GM12878 (cell line): ENCODE measurements at regions of chrX and their contacts with region 1.

Region 1: DNA sequence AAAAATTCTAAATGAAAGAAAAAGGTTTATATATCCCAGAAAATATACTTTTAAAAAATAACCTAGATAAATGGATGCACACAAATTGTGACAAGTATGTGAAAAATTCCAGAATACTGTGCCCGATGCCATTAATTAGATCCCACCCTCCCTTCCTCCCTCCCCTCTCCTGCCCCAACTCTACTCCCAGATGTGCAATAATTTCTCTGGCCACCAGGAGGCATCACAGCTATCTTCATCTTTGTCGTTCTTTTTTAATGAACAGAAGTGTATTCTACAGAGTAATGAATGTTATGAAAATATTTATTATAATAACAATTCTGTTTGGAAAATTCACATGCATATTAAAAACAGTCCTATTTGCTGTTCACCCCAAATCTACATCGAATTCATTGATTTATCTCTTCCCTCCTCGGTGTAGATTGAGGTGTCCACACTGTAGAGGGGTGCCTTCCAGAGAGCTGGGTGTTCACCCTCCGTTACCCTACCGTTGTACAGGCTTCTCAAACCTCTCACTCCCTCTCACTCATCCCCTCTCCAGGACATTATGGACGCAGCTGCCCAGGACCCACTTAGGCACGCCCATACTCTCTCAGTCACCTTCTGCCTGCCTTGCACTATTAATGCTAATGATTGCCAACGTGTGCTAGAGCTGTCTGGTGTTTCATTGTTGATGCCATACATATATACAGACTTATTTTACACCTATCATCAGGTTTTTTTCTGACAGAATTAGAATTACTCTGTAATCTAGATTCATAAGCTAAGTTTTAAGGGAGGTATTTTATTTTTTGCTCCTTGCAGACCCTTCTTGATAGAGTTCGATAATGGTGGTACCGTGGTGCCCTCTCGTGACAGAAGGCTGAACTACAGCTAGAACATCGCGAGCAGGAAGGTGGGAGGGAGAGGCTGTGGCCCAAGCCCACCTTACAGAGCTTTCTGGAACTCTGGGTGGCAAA is 14.1 kb downstream of the RAB40AL start:
- DNase-seq: no peak
- ATAC-seq: peak; percentile 91
- H3K4me3 ChIP-seq: no peak overlapping the region
- H3K27ac ChIP-seq: no peak overlapping the region
- H3K4me1 ChIP-seq: no peaks in the 10 kb centered on the region
- H3K27me3 ChIP-seq: no peaks in the 10 kb centered on the region; a peak in 1 of 4 replicates
- CTCF ChIP-seq: peak; percentile 56 to 68 (median 63)
- EP300 ChIP-seq: no peak
- POLR2A ChIP-seq: no peak
- RAD21 ChIP-seq: peak; percentile 49

Region 2: GRCh38 chrX:102067966-102068708 is 883.0 kb before region 1 on chrX:
- CTCF ChIA-PET with region 1: interaction called, 10 read pairs
- POLR2A ChIA-PET with region 1: no interaction called
- RAD21 ChIA-PET with region 1: no interaction called
- SMC1A ChIA-PET with region 1: no interaction called
- in situ Hi-C with region 1: no loop called
- intact Hi-C with region 1: no loop called
- DNase-seq: peak; percentile 1
- ATAC-seq: 0 out of 3 replicates have a peak, but pooled peaks have one; percentile 39
- H3K4me3 ChIP-seq: no peak overlapping the region
- H3K27ac ChIP-seq: no peak overlapping the region
- H3K4me1 ChIP-seq: no peaks in the 10 kb centered on the region
- H3K27me3 ChIP-seq: no peaks in the 10 kb centered on the region
- CTCF ChIP-seq: peak; percentile 51 to 67 (median 58); a peak in 5 of 6 replicates
- EP300 ChIP-seq: no peak
- POLR2A ChIP-seq: no peak
- RAD21 ChIP-seq: peak; percentile 71

Region 3: DNA sequence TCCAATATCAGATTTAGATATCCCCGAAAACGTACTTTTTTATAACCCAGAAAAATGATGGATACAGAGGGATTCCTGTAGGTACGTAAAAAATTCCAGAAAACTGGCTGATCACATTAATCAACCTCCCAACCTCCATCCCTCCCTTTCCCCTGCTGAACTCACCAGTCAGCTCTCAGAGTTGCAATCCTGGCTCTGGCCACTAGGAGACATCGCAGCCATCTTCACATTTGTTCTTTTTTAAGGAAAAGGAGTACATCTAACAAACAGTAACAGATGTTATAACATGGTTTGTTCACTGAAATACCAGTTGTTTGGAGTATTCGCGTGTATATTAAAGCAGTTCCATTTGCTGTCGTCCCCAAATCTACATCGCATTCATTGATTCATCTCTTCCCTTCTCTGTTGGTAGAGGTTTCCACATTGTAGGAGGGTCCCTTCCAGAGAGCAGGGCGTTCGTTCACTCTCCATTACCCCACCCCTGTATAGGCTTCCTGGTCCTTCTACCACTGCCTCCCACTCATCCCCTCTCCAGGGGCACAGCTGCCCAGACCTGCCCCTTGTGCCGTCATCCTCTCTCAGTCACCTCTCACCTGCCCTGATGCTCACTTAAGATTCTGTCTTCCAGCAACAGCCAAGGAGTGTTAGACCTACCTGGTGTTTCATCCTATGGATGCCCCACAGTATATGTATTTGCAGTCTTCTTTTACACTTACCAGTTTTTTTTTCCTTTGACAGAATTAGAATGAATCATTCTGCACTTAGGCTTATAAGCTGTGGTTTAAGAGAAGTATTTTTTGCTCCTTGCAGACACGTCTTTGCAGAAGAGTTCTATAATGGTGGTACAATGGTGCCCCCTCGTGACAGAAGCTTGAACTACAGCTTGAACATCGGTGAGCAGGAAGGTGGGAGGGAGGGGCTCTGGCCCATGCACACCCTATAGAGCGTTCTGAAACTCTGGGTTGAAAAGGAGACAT is 51.0 kb before region 1 on chrX:
- CTCF ChIA-PET with region 1: interaction called, 14 read pairs
- POLR2A ChIA-PET with region 1: no interaction called
- RAD21 ChIA-PET with region 1: interaction called, 3 read pairs
- SMC1A ChIA-PET with region 1: interaction called, 3 read pairs
- in situ Hi-C with region 1: no loop called
- intact Hi-C with region 1: no loop called
- DNase-seq: peak; percentile 33
- ATAC-seq: peak; percentile 98
- H3K4me3 ChIP-seq: no peak overlapping the region
- H3K27ac ChIP-seq: no peak overlapping the region
- H3K4me1 ChIP-seq: no peaks in the 10 kb centered on the region
- H3K27me3 ChIP-seq: no peaks in the 10 kb centered on the region
- CTCF ChIP-seq: peak; percentile 67 to 78 (median 68)
- EP300 ChIP-seq: no peak
- POLR2A ChIP-seq: no peak
- RAD21 ChIP-seq: peak; percentile 69

Region 4: DNA sequence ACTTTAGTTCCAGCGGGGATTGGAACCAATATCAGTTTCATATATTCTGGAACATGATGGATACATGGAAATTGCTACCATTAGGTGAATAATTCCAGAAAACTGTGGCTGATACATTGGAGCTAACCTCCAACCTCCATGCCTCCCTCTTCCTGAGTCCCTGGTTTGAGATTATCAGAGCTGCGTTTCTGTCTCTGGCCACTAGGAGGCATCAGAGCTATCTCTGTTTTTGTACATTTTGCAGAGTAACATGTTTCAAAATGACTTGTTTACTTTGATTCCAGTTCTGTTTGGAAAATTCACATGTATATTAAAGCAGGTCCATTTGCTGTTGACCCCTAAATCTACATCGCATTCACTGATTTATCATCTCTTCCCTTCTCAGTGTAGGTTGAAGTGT is 16.6 kb before region 1 on chrX:
- CTCF ChIA-PET with region 1: interaction called, 32 read pairs
- POLR2A ChIA-PET with region 1: no interaction called
- RAD21 ChIA-PET with region 1: interaction called, 8 read pairs
- SMC1A ChIA-PET with region 1: interaction called, 10 read pairs
- in situ Hi-C with region 1: no loop called
- intact Hi-C with region 1: no loop called
- DNase-seq: no peak
- ATAC-seq: peak; percentile 67
- H3K4me3 ChIP-seq: no peak overlapping the region
- H3K27ac ChIP-seq: no peak overlapping the region
- H3K4me1 ChIP-seq: no peaks in the 10 kb centered on the region
- H3K27me3 ChIP-seq: no peaks in the 10 kb centered on the region
- CTCF ChIP-seq: peak; percentile 61 to 90 (median 81)
- EP300 ChIP-seq: no peak
- POLR2A ChIP-seq: no peak
- RAD21 ChIP-seq: peak; percentile 31; the same call in 1 of the 2 replicates

Region 5: DNA sequence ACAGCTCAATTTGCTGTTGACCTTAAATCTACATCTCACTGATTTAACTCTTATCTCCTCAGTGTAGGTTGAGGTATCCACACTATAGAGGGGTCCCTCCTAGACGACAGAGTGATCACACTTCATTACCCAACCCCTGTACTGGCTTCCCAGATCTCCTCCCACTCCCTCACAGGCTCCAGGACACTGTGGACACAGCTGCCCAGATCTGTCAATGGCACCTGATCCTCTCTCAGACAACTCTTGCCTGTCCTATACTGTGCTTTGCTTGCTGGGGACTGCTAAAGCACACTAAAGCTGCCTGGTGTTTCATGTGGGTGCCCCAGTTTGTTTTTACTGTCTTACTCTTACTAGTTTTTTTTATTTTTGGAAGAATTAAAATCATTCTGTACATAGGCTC is 13.8 kb after region 1 on chrX:
- CTCF ChIA-PET with region 1: interaction called, 15 read pairs
- POLR2A ChIA-PET with region 1: no interaction called
- RAD21 ChIA-PET with region 1: interaction called, 6 read pairs
- SMC1A ChIA-PET with region 1: no interaction called
- in situ Hi-C with region 1: no loop called
- intact Hi-C with region 1: no loop called
- DNase-seq: no peak
- ATAC-seq: no peak
- H3K4me3 ChIP-seq: no peak overlapping the region
- H3K27ac ChIP-seq: no peak overlapping the region
- H3K4me1 ChIP-seq: no peaks in the 10 kb centered on the region
- H3K27me3 ChIP-seq: no peaks in the 10 kb centered on the region
- CTCF ChIP-seq: no peak
- EP300 ChIP-seq: no peak
- POLR2A ChIP-seq: no peak
- RAD21 ChIP-seq: no peak

Region 6: DNA sequence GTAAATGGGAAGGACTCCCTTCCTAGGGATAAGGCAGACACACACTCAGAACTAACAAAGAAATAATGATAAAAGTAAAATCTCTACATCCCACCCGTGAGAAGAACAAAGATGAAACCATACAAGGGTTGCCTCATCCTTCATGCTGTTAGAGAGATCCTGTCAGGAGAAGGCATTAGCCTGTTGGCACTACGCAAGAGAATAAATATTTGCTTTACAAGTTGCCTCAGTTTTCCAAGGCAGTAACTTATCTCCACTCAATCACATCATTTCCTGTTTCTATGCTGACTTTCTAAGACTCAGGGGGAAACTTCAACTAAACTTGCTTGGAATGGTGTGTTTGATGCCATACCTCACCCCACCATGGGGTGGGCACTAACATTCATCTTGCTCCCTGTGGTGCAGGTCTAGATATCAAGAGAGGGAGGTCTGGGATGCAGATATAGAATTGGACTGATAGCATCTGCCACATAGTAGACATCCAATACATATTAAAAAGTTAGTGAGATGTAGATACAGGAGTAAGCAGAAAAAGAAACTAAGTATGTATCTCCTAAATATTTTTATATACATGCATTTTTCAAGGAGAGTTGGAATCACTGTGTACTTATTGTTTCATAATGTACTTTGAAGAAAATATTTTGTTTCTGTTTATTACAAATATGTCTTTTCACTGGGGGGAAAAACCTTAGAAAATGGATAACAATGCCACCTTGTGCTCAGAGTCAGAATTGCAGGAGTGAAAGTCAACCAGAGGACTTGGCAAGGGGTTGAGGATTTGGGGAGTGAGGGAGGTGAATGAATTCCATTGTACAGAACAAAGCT is 206.5 kb after region 1 on chrX:
- CTCF ChIA-PET with region 1: interaction called, 10 read pairs
- POLR2A ChIA-PET with region 1: no interaction called
- RAD21 ChIA-PET with region 1: interaction called, 4 read pairs
- SMC1A ChIA-PET with region 1: interaction called, 3 read pairs
- in situ Hi-C with region 1: no loop called
- intact Hi-C with region 1: loop called (anchors 1 kb)
- DNase-seq: no peak
- ATAC-seq: peak; percentile 69
- H3K4me3 ChIP-seq: no peak overlapping the region
- H3K27ac ChIP-seq: no peak overlapping the region
- H3K4me1 ChIP-seq: no peaks in the 10 kb centered on the region
- H3K27me3 ChIP-seq: no peaks in the 10 kb centered on the region
- CTCF ChIP-seq: peak; percentile 66 to 75 (median 71); a peak in 5 of 6 replicates
- EP300 ChIP-seq: no peak
- POLR2A ChIP-seq: no peak
- RAD21 ChIP-seq: peak; percentile 56

Region 7: GRCh38 chrX:103175944-103176753 is 225.0 kb after region 1 on chrX:
- CTCF ChIA-PET with region 1: interaction called, 27 read pairs
- POLR2A ChIA-PET with region 1: no interaction called
- RAD21 ChIA-PET with region 1: interaction called, 3 read pairs
- SMC1A ChIA-PET with region 1: interaction called, 15 read pairs
- in situ Hi-C with region 1: loop called (anchors 10 kb)
- intact Hi-C with region 1: loop called (anchors 1 kb)
- DNase-seq: no peak
- ATAC-seq: peak; percentile 81
- H3K4me3 ChIP-seq: no peak overlapping the region
- H3K27ac ChIP-seq: no peak overlapping the region
- H3K4me1 ChIP-seq: no peaks in the 10 kb centered on the region
- H3K27me3 ChIP-seq: no peaks in the 10 kb centered on the region; a peak in 1 of 4 replicates
- CTCF ChIP-seq: peak; percentile 72 to 79 (median 73)
- EP300 ChIP-seq: no peak
- POLR2A ChIP-seq: no peak
- RAD21 ChIP-seq: peak; percentile 66